ENCODE measurements at regions of chr2 and their contacts with region 1.

Region 1: DNA sequence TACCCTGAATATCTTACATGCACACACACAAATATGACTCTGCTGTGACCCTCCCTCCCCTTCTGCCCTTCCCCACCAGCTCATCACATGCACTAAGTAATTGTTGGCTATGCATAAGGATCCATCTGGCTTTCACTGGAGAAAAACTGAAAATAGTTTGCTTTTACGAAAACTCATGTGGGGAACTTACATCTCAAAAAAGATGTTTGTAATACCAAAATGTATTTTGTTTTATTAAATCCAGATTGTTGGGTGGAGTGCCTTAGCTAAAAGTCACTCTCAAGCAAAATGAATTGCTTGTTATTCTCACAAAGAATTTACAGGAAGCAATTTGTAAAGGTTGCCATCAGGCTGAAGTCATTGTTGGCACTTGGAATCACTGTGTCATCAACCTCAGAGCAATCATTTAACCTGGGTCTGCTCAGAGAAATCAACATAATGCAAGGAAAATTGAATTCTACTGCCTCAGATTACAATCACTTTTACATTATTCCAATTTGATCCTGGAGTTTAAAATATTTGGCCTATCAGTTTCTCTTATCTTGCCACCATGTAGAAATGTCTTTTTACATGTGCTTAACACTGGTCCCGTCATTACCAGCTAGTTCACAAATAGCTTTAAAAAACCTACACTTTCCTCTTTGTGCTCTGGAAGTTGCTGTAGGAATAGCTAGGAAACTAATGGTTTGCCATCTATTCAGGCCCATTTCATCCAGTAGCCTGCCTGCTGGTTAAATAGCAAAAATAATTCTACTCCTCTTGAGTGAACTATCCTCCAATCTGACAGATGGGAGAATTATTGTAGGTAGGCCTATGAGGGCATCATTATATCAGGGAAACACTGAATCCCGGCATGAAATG is 90.3 kb upstream of the TMEM17 start:
- DNase-seq: no peak
- ATAC-seq: no peak
- H3K4me3 ChIP-seq: no peak overlapping the region
- H3K27ac ChIP-seq: no peak overlapping the region
- H3K4me1 ChIP-seq: peaks cover 28% of the 10 kb centered on the region
- H3K27me3 ChIP-seq: no peaks in the 10 kb centered on the region
- CTCF ChIP-seq: no peak
- EP300 ChIP-seq: no peak
- POLR2A ChIP-seq: no peak
- RAD21 ChIP-seq: no peak

Region 2: DNA sequence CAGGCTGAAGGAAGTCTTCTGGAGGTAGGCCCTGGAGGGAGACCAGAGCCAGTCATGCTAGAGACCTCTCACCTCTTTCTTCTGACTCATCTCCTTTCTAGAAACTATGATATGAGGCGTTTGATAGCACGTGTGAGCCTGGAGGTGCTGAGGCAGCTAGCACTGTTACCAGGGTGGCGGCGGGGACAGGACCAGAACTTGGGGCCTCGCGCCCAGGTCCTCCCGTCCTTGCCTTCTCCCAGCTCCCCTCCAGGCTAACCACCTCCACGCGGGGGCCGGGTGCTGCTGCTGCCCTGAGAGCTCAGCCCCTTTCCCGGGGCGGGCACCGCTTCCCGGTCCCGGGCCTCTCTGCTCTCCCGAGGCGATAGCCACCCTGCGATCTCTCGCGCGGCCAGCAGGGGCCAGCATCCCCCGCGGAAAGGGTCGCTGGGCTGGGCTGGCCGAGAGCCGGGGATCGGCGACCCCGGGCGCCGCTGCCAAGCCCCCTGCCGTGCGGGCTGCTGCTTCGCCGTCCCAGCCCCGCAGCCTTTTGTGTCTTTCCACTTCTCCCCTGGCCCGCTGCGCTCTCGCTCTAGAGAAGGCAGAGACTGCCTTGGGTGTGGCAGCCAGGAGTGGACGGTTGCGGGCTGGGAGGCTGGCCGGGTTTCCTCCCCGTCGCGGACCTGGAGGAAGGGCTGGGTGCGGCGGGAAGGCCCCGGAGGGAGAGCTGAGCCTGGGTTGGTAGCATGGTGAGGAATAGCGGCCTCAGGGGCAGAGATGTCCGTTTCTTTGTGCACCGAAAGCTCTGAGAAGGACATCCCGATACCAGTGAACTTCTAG is 139.4 kb before region 1 on chr2:
- CTCF ChIA-PET with region 1: no interaction called
- POLR2A ChIA-PET with region 1: no interaction called
- in situ Hi-C with region 1: no loop called
- intact Hi-C with region 1: no loop called
- DNase-seq: peak; percentile 63
- ATAC-seq: peak; percentile 97
- H3K4me3 ChIP-seq: peak overlapping the region; percentile 43 to 70 (median 59); a peak in 5 of 6 replicates
- H3K27ac ChIP-seq: peak overlapping the region; percentile 76
- H3K4me1 ChIP-seq: peaks cover 70% of the 10 kb centered on the region
- H3K27me3 ChIP-seq: no peaks in the 10 kb centered on the region
- CTCF ChIP-seq: peak; percentile 99
- EP300 ChIP-seq: peak; percentile 28 to 44; a peak in 1 of 4 replicates
- POLR2A ChIP-seq: peak in 1 of 2 experiments; percentile 28; a peak in 1 of 4 replicates
- RAD21 ChIP-seq: peak; percentile 100

Region 3: DNA sequence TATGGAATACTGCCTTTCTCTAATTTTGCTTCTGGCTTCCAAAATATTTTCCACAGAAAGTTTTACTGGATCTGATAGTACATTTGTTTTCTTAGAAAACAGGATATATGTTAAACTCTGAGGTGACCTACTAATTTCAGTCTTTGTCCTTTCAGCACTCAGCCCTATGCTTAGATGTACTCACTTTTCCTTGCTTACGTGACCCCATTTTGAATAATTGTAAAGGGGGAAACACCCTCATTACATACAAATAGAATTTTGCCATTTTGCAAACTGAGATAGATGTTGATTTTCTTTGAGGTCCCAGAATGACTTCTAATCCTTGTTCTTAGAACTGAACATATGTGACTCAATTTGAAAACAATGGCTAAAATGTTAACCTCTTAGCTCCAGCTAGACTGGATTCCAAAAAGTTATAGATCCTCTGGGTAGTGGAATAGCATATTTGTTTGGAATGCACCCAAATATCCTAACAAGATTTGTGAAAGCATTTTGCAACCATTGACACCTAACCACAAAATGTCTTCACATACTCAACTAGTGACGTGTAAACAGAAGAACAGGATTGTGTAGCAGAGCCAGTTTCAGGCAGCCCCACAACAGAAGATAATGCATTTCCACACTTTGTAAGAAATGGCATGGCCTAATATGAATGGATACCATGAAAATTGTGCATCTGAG is 64.4 kb after region 1 on chr2:
- CTCF ChIA-PET with region 1: no interaction called
- POLR2A ChIA-PET with region 1: no interaction called
- in situ Hi-C with region 1: no loop called
- intact Hi-C with region 1: loop called (anchors 5 kb)
- DNase-seq: no peak
- ATAC-seq: no peak
- H3K4me3 ChIP-seq: no peak overlapping the region
- H3K27ac ChIP-seq: no peak overlapping the region
- H3K4me1 ChIP-seq: peaks cover 56% of the 10 kb centered on the region
- H3K27me3 ChIP-seq: no peaks in the 10 kb centered on the region
- CTCF ChIP-seq: no peak
- EP300 ChIP-seq: no peak
- POLR2A ChIP-seq: no peak
- RAD21 ChIP-seq: no peak

Region 4: DNA sequence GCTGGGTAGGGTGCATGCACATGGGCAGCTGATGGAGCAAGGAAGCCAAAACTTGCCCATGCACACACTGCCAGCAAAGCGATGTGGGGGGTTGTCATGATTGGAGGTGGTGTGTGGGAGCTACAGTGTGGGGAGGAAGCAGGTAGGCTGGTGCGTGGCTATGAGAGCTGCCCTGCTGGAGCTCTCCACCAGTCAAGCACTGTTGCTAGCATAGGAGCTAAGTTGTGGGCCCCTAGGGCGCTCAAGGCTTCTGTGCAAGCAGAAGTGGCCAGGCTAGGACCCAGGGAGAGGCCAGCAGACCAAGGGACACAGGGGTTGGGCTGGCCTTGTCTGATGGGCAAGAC is 129.4 kb after region 1 on chr2:
- CTCF ChIA-PET with region 1: no interaction called
- POLR2A ChIA-PET with region 1: no interaction called
- in situ Hi-C with region 1: no loop called
- intact Hi-C with region 1: no loop called
- DNase-seq: no peak
- ATAC-seq: peak; percentile 52
- H3K4me3 ChIP-seq: no peak overlapping the region
- H3K27ac ChIP-seq: no peak overlapping the region
- H3K4me1 ChIP-seq: peaks cover 86% of the 10 kb centered on the region
- H3K27me3 ChIP-seq: no peaks in the 10 kb centered on the region
- CTCF ChIP-seq: no peak
- EP300 ChIP-seq: no peak
- POLR2A ChIP-seq: no peak
- RAD21 ChIP-seq: no peak

Region 5: GRCh38 chr2:62874881-62875383 is 278.6 kb after region 1 on chr2:
- CTCF ChIA-PET with region 1: no interaction called
- POLR2A ChIA-PET with region 1: no interaction called
- in situ Hi-C with region 1: no loop called
- intact Hi-C with region 1: no loop called
- DNase-seq: no peak
- ATAC-seq: peak; percentile 50
- H3K4me3 ChIP-seq: no peak overlapping the region
- H3K27ac ChIP-seq: no peak overlapping the region
- H3K4me1 ChIP-seq: peaks cover 13% of the 10 kb centered on the region
- H3K27me3 ChIP-seq: no peaks in the 10 kb centered on the region
- CTCF ChIP-seq: no peak
- EP300 ChIP-seq: no peak
- POLR2A ChIP-seq: no peak; a peak in 1 of 4 replicates
- RAD21 ChIP-seq: no peak

Region 6: GRCh38 chr2:63665846-63666475 is 1069.7 kb after region 1 on chr2:
- CTCF ChIA-PET with region 1: no interaction called
- POLR2A ChIA-PET with region 1: no interaction called
- in situ Hi-C with region 1: no loop called
- intact Hi-C with region 1: loop called (anchors 5 kb)
- DNase-seq: no peak
- ATAC-seq: no peak
- H3K4me3 ChIP-seq: no peak overlapping the region
- H3K27ac ChIP-seq: no peak overlapping the region
- H3K4me1 ChIP-seq: peaks cover 8% of the 10 kb centered on the region; the same call in 1 of the 2 replicates
- H3K27me3 ChIP-seq: peaks cover 0 to 5% of the 10 kb centered on the region in 2 experiments; a peak in 2 of 5 replicates
- CTCF ChIP-seq: no peak
- EP300 ChIP-seq: no peak
- POLR2A ChIP-seq: no peak
- RAD21 ChIP-seq: no peak

Measured in HepG2 (cell line).